A673 (cell line): ENCODE measurements at regions of chr10 and their contacts with region 1.

Region 1: DNA sequence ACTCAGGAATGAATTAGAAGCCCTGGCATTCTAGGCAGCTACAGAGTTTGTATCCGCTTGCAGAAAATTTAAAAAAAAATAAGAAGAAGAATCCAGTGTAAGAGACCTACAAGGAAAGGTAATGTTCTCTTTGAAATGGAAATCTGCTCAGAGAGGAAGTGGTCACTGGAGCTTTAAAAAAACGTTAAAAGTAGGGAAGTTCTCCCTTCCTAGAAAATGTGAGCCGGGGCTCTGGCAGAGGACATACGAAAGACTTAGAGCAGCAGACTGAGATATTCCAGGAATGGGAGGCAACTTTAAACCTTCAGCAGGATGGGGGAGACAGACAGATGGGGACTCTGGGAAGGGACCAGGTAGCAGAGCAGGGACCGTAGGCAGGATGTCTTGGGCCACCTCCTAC is 149.4 kb upstream of the NPS start:
- DNase-seq: no peak
- H3K4me3 ChIP-seq: no peak overlapping the region
- H3K27ac ChIP-seq: no peak overlapping the region
- H3K4me1 ChIP-seq: peaks cover 25% of the 10 kb centered on the region
- H3K27me3 ChIP-seq: no peaks in the 10 kb centered on the region
- CTCF ChIP-seq: no peak

Region 2: DNA sequence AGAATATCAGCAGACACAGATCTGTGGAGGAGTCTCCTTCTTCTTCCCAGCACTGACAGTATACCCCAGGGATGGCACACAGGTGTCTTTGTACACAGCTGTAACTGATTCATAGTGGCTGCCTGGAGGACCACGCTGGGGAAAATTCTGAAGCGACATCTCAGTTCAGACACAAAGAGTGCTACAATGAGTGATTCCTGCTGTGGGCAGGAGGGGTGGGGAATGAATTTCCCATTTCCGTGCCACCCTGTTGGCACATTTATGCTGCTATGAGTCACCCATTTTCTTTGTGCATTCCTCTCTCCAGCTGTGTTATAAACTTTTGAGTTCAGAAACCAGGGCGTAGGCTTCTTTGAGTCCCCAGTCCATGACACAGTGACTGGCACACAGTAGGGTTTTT is 125.2 kb after region 1 on chr10:
- CTCF ChIA-PET with region 1: no interaction called
- POLR2A ChIA-PET with region 1: no interaction called
- intact Hi-C with region 1: loop called (anchors 1 kb)
- DNase-seq: peak; percentile 96
- H3K4me3 ChIP-seq: no peak overlapping the region
- H3K27ac ChIP-seq: peak overlapping the region; percentile 83
- H3K4me1 ChIP-seq: peaks cover 66% of the 10 kb centered on the region
- H3K27me3 ChIP-seq: no peaks in the 10 kb centered on the region
- CTCF ChIP-seq: no peak

Region 3: GRCh38 chr10:127577376-127577775 is 177.7 kb after region 1 on chr10:
- CTCF ChIA-PET with region 1: no interaction called
- POLR2A ChIA-PET with region 1: no interaction called
- intact Hi-C with region 1: no loop called
- DNase-seq: peak; percentile 59
- H3K4me3 ChIP-seq: no peak overlapping the region
- H3K27ac ChIP-seq: no peak overlapping the region
- H3K4me1 ChIP-seq: peaks cover 10% of the 10 kb centered on the region
- H3K27me3 ChIP-seq: no peaks in the 10 kb centered on the region
- CTCF ChIP-seq: peak; percentile 61; the same call in 1 of the 2 replicates

Region 4: DNA sequence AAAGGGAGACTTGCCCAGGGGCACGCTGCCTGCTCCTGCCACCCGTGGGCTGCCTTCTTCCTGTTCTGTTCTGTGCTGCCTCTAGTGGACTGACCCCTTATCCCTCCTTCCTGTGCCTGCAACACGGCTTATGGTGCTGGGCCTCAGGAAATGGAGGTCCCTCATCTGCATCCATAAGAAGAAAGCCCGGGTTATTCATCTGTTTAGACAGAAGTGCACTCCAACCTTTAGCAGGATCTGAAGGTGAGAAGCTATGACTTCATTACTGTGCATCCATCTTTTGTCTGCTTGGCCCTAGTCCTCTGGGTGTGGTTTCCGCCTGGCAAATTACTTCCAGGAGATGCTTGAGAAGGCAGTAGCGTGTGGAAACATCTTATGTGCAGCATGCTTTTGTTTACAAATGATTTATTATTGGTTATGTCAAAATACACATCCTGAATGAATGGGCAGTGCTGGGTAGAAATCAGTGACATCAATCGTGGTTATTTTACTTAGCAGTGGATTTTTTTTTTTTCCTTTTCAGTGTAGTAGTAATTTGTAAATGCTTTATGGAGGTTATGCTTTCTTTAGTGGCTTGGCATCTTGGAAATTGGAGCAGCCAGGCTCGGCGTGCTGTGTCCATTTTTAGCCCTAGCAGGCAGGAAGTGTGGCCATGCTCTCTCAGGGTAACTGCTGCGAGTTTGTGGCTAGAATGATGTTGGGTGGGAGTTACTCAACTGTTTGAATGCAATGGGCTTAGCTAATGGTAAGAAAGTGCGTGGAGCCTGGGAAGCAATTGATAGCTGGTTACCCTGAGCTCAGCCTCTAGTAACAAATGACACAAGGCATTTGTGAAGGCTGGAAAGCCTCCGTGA is 520.0 kb after region 1 on chr10:
- CTCF ChIA-PET with region 1: no interaction called
- POLR2A ChIA-PET with region 1: no interaction called
- intact Hi-C with region 1: no loop called
- DNase-seq: peak; percentile 18
- H3K4me3 ChIP-seq: no peak overlapping the region
- H3K27ac ChIP-seq: no peak overlapping the region
- H3K4me1 ChIP-seq: no peaks in the 10 kb centered on the region
- H3K27me3 ChIP-seq: no peaks in the 10 kb centered on the region
- CTCF ChIP-seq: peak; percentile 38; the same call in 1 of the 2 replicates